Naive thymus-derived CD8-positive, alpha-beta T cell (primary cell): ENCODE measurements at regions of chr5 and their contacts with region 1.

Region 1: DNA sequence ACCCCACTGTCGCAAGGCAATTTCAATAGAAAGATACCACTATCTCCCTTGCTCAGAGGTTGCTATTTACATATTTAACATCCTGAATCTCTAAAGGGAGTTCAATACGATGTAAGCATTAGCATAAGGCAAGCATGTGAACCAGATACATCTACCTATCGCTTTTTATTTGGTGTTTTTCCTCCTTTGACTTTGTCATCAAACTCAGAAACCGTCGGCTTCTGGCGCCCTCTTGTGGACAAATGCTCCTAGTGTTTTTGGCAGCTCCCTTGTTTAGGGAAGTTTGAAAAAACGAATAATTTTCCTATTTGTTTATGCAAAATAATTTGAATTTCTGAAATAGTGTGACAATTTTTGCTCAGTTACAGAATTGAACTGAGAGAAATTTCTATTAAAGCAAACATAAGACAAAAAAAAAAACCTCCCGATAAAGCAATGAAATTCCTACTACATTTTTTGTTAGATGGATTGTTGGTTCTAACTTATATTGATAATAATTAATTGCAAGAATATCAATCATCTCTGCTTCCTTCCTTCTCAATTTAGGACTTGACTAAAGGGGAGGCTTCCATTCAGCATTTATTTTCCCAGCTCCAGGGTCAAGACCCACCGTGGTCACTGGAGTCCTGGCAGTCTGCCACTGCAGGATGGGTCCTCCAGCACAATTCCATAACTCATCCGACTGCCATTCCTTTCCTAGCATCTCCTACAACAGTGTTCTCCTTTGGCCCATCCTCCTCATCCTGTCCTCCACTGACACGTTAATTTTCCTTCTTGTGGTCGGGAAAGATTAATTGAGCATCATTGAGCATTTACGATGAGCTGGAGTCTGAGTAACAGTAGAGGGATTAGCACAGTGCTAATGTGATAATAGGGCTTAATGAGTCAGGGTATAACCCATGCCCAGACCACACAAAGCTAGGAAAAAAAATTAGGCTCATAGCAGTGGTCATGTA is 131.8 kb upstream of the CHD1 start:
- DNase-seq: peak; percentile 68 to 90 (median 84)
- ATAC-seq: peak; percentile 77 to 78
- H3K4me3 Mint-ChIP-seq: peak overlapping the region in 6 of 10 donors; percentile 10 to 42 (median 32)
- H3K27ac Mint-ChIP-seq: peak overlapping the region in 2 of 10 donors; percentile 4 to 22
- H3K4me1 Mint-ChIP-seq: peaks cover 2 to 35% (median 15%) of the 10 kb centered on the region in 4 donors
- H3K27me3 Mint-ChIP-seq: peaks cover 0 to 11% (median 3%) of the 10 kb centered on the region in 5 donors

Region 2: DNA sequence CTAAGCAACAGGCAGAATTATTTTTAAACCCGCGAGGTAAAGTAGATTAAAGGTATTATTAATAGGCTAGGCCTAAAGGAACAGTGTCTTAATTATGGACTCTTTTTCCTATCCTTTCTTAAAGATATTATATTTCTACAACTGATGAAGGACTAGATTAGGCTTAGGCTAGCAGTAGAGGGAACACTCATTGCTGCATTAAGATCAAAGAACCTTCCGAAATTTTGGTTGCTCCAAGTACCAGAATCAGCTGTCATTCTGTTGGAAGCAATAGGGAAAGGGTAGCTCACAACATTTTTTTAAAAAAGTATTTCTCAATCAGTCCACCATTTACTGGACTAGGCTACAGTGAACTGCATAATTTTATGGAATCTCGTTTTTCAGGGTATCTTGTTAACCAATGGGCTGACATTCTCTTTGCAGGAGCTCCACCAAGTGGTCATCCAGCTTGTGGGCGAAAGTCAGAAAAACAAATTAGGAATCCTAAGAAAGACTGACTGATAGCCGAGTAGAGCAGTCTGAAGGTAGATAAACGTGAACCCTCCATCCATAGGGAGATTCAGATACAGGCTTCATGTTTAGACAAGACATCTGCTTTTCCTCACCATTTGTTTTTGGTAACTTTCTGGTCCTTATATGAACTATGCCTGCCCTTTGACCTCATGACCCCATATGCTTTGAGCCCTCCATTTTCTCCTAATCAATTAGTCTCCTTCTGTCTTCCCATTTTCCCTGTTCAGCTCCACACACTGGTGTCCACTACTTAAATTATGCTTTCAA is 28.2 kb before region 1 on chr5:
- POLR2A ChIA-PET with region 1: interaction called, 22 read pairs
- DNase-seq: peak in 3 of 10 donors; percentile 14 to 29 (median 21)
- ATAC-seq: peak; percentile 19 to 45
- H3K4me3 Mint-ChIP-seq: peak overlapping the region; percentile 76 to 95 (median 88)
- H3K27ac Mint-ChIP-seq: peak overlapping the region; percentile 84 to 98 (median 94)
- H3K4me1 Mint-ChIP-seq: peaks cover 29 to 82% (median 60%) of the 10 kb centered on the region in 4 donors
- H3K27me3 Mint-ChIP-seq: no peaks in the 10 kb centered on the region